Adrenal gland (tissue), 19 donors: ENCODE measurements at regions of chr6 and their contacts with region 1.

Region 1: GRCh38 chr6:133923938-133924593 is 29.0 kb upstream of the TBPL1 start:
- DNase-seq: peak; percentile 53 to 91 (median 75)
- H3K4me3 ChIP-seq: no peak overlapping the region
- H3K27ac ChIP-seq: no peak overlapping the region
- H3K4me1 ChIP-seq: no peaks in the 10 kb centered on the region
- H3K27me3 ChIP-seq: peaks cover 4% of the 10 kb centered on the region
- CTCF ChIP-seq: peak; percentile 64 to 94 (median 88)
- POLR2A ChIP-seq: no peak

Region 2: DNA sequence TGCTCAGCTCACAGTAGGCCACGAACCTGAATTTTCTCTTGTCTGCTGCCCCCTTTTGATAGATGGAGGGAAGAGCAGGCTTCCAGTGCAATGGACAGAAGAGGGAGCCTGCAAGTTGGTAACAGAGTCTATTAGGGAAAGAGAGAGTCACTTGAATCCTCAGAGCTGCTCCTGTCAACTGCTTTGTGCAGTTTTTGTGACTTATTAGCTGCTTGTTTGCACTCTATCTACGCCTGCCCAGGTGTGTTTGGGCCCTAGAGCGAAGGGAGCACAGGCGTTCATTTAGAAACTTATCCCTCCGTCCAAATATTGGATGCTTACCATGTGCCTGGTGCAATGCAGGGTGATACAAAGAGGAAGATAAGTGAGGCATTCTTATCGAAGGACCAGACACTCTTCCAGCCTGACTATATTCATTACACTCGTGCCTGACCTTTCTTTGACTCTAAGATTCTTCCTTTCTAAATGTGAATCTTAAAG is 139.9 kb after region 1 on chr6:
- intact Hi-C with region 1: loop called in 1 of 2 experiments (anchors 10 kb)
- DNase-seq: peak; percentile 56 to 88 (median 67)
- H3K4me3 ChIP-seq: no peak overlapping the region
- H3K27ac ChIP-seq: no peak overlapping the region
- H3K4me1 ChIP-seq: peaks cover 0 to 2% of the 10 kb centered on the region in 2 donors
- H3K27me3 ChIP-seq: no peaks in the 10 kb centered on the region
- CTCF ChIP-seq: peak; percentile 66 to 83 (median 78)
- POLR2A ChIP-seq: no peak

Region 3: DNA sequence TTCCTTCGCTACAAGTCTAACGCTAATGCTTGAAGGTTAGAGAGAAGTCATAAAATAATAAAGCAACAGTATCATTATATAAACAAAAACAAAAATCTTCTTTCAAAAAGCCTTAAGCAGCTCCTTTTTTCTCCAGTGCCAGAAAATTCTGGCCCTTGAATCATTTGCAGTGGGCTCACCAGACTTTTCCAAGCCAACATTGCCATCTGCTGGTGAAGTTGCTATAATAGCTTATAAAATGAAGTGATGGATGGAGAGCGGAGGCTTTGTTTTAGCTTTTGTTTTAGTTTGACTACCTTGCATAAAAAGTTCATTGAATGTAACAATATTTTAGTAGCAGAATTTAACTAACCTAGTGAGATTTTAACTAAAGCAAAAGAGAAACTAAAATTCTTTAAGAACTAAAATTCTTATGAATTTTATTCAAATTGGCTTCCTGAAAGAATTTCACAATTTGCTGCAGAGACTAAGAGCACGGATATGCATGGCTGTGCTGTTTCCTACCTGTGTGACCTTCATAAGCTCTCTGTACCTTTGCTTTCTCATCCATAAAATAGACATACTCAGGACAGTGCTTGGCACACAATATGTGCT is 173.1 kb after region 1 on chr6:
- intact Hi-C with region 1: loop called (anchors 2 to 5 kb)
- DNase-seq: peak; percentile 47 to 85 (median 70)
- H3K4me3 ChIP-seq: no peak overlapping the region
- H3K27ac ChIP-seq: no peak overlapping the region
- H3K4me1 ChIP-seq: no peaks in the 10 kb centered on the region
- H3K27me3 ChIP-seq: peaks cover 3% of the 10 kb centered on the region
- CTCF ChIP-seq: peak; percentile 56 to 81 (median 72)
- POLR2A ChIP-seq: no peak